ENCODE measurements at regions of chr15 and their contacts with region 1.

Region 1: DNA sequence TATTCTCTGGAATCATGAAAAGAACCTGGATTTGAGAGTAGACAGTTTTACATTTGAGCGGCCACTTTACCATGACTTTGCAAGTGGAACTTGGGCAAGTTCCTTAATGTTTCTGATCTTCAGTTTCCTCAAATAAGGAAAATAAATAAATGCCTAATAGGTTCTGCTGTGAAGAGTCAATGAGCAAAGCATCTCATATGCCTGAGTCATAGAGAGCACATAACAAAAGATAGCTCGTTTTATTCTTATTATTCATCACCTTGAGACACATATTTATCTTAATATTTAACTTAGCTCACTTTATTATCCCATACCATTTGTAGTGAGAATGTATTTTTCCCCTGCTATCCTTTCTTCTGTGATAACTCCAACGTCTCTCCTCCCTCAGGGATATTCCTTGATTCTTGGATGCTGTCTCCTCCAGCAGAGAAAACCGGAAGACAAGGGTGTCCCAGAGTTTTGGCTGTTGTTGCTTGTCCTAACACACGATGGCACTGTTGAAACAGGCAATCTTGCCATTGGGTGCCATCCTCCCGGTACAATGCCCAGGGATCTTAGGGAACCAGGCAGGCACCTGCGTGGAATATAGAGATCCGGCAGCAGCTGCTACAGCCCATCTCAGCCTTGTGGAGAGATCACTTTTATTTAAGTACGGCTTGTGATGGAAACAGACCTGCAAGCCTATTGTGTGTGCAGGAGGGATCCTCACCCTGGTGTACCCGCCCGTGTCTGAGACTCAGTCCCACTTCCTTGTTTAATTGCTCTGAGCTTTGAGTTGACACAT is 33.3 kb upstream of the VPS33B start:
- DNase-seq: peak in 2 of 4 experiments; percentile 46 to 57
- ATAC-seq: peak; percentile 85
- H3K4me3 ChIP-seq: no peak overlapping the region
- H3K27ac ChIP-seq: no peak overlapping the region
- H3K4me1 ChIP-seq: no peaks in the 10 kb centered on the region
- H3K27me3 ChIP-seq: peaks cover 5 to 18% of the 10 kb centered on the region in 2 experiments; a peak in 4 of 5 replicates
- CTCF ChIP-seq: peak; percentile 81 to 90 (median 85)
- EP300 ChIP-seq: no peak
- POLR2A ChIP-seq: no peak
- RAD21 ChIP-seq: peak; percentile 91 to 93

Region 2: DNA sequence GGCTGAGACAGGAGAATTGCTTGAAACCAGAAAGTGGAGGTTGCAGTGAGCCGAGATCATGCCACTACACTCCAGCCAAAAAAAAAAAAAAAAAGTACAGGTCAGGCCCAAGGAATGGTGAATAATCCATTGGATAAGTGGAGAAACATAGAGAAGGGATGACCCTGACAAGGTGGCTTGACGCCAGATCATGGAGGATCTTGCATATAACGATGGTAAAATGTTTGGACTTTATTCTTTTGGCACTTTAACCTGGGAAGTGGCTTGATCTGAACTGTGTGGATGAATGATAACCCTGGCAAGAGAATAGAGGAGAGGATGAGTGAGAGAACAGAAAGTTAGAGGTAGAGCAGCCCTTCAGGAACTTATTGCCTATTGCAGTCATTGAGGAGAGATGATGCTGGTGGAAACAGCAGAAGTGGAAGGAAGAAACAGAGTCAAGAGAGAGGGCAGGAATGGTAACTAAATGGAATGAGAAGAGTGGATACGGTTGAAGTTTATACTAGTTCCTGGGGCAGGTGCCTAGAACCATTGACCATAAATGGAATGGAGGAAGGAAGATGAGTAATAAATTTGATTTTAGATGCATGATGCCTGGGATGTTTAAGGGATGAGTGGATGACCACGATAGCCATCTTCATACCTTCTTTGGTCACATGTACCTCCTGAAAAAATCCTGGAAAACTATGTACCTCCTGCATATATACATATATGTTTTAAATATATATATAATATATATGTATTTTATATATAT is 280.8 kb before region 1 on chr15:
- CTCF ChIA-PET with region 1: no interaction called
- POLR2A ChIA-PET with region 1: no interaction called
- in situ Hi-C with region 1: no loop called
- intact Hi-C with region 1: no loop called
- DNase-seq: no peak
- ATAC-seq: no peak
- H3K4me3 ChIP-seq: no peak overlapping the region
- H3K27ac ChIP-seq: no peak overlapping the region
- H3K4me1 ChIP-seq: no peaks in the 10 kb centered on the region
- H3K27me3 ChIP-seq: no peaks in the 10 kb centered on the region
- CTCF ChIP-seq: no peak
- EP300 ChIP-seq: no peak
- POLR2A ChIP-seq: no peak
- RAD21 ChIP-seq: no peak

Region 3: DNA sequence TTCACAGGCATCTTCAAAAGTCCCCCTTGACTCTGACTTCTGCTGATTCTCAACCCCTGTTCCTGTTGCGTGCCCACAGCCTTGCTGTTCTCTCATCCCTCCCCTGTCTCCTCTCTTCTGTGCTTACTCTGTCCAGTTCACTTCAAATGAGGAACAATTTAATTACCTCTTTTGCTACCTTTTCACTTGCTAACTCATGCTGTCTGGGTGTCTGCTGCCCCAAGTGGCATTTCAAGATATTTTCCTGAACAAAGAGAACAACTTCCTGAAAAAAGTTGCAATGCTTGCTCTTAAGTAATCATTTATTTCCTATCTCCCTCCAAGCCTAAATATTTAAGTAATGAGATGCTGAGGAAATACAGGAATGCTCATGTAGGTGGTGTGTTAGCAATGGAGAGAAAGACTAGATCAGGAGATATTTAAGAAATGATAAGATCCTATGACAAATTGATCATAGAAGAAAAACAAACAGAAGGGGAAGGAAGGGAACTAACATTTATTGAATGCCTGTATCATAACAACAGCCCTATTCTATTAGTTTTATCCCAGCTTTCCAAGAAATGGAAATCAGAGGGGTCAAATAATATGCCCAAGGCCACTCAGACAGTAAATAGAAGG is 86.5 kb after region 1 on chr15:
- CTCF ChIA-PET with region 1: no interaction called
- POLR2A ChIA-PET with region 1: no interaction called
- in situ Hi-C with region 1: no loop called
- intact Hi-C with region 1: loop called (anchors 5 kb)
- DNase-seq: peak in 2 of 4 experiments; percentile 14 to 19
- ATAC-seq: peak; percentile 72
- H3K4me3 ChIP-seq: no peak overlapping the region
- H3K27ac ChIP-seq: no peak overlapping the region
- H3K4me1 ChIP-seq: no peaks in the 10 kb centered on the region
- H3K27me3 ChIP-seq: peaks cover 5 to 6% of the 10 kb centered on the region in 2 experiments; a peak in 3 of 5 replicates
- CTCF ChIP-seq: peak; percentile 38 to 65 (median 56); a peak in 5 of 6 replicates
- EP300 ChIP-seq: no peak
- POLR2A ChIP-seq: no peak
- RAD21 ChIP-seq: peak in 1 of 2 experiments; percentile 18; a peak in 1 of 4 replicates

Region 4: DNA sequence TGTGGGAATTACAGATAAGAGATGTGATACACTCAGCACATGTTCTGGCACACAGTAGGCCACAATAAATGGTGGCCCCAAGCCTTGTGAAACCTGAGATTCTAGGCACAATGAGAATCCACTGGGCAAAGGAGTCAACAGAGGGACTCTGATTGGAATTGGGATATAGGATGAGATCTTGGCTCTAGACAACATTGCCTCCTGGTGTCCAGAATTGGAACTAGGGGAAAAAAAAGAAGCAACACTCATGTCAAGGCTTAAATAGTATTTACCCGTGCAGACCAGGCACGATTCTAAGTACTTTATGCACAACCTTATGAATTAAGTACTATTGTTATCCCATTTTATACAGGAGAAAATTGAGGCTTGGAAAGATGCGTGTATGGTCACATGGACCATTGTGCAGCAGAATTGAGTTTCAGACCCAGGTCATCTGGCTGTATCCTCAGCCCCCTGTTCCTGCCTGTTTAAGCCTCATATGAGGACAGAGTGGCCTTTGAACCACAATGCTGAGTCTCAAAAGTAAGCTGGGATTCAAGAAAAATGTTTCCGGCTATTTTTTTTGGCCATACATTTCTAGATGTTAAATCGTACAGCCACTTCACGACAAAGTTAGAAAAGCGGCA is 169.1 kb after region 1 on chr15:
- CTCF ChIA-PET with region 1: interaction called, 25 read pairs
- POLR2A ChIA-PET with region 1: no interaction called
- in situ Hi-C with region 1: loop called (anchors 5 kb)
- intact Hi-C with region 1: loop called (anchors 1 kb)
- DNase-seq: peak; percentile 48 to 60 (median 48)
- ATAC-seq: peak; percentile 84
- H3K4me3 ChIP-seq: no peak overlapping the region
- H3K27ac ChIP-seq: no peak overlapping the region
- H3K4me1 ChIP-seq: no peaks in the 10 kb centered on the region
- H3K27me3 ChIP-seq: peaks cover 13 to 36% of the 10 kb centered on the region in 2 experiments
- CTCF ChIP-seq: peak; percentile 60 to 87 (median 76)
- EP300 ChIP-seq: no peak
- POLR2A ChIP-seq: no peak
- RAD21 ChIP-seq: peak; percentile 71 to 89